Sigmoid colon (tissue), 7 donors: ENCODE measurements at regions of chr17 and their contacts with region 1.

Region 1: DNA sequence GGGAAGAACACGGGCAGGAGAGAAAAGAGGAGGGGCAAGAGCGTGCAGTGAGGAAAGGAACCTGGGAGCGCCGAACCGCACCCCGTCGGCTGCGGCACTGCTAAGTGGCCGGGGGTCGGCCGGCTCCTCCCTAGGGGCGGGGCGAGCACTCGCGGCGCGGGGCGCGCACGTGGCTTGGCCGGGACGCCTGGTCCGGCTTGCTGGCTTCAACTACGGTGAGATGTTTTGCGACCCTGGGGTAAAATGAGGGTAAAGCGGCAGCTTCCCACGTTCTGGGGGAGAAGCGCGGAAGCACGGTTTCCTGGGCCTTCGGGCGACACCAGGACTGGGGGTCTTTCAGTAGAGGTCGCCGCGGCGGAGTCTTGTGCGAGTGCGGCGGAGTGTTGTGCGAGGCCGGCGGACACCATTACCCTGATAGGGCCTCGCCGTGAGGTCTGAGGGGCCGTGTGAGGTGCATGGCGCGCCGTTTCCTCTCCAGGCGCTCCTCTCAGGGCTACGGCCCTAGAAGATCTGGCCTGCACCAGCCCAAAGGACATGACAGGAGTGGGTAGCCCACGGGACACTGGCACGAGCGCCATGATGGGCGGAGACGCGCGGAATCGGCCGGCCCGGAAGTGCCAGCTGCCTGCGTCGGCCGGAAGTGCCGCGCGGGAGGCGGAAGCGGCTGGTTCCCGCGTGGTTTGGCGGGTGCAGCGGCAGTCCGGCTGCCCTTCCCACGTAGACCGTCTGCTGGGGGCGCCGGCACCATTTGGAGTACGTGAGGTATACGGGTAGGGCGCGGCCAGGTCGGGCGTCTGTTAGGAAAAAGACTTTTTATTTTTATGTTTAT is at the starts of genes MYO19 and PIGW:
- DNase-seq: peak; percentile 93
- H3K4me3 ChIP-seq: peak within 1 kb of the TSS; percentile 67 to 76 (median 74)
- H3K27ac ChIP-seq: peak within 1 kb of the TSS; percentile 95 to 98 (median 96)
- H3K4me1 ChIP-seq: peaks cover 0 to 16% (median 5%) of the 10 kb centered on the region in 4 donors
- H3K27me3 ChIP-seq: no peaks in the 10 kb centered on the region
- CTCF ChIP-seq: no peak
- EP300 ChIP-seq: no peak
- POLR2A ChIP-seq: peak; percentile 89 to 91
- total RNA-seq, gene MYO19: 49.9 to 67.2 (median 59.5) TPM
- total RNA-seq, gene PIGW: 1.7 to 3.9 (median 3.0) TPM

Region 2: DNA sequence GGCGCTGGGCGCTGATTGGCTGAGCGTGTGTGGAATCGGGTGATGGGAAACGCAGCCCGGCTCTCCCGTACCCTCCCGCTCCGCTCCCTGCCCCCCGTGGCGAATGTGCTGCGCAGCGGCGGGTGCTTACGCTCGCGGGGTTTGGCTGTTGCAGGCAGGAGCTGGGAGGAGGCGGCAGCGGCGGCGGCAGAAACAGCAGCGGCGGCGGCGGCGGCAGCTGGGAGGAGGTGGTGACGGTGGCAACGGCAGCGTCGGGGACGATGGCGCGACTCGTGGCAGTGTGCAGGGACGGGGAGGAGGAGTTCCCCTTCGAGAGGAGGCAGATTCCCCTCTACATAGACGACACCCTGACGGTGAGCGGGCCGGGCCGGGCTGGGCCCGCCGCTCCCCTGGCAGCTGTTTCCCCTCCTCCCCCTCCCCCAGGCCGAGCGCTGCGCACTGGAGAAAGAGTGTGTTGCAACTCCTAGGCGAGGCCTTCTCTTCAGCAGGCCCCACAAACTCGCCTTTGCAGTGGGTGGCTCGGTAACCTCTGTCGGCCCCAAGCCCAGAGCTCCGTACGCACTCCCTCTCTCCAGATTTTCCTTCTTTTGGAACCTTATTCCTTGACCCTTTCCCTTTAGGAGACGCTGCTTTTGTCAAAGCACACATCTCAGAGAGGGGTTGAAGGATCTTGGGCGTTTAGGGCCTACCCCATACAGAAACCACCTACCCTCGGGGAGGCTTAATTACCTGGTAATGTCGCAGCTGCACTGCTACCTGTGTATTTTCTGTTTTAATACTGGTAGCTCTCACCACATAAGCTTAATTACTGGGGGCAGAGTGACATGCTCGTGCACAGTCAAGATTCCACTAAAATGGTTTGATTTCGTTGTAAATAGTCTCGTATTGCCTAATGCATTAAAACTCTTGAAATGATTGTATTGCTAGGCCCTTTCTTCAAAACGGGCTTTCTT is 10.7 kb after region 1 on chr17:
- intact Hi-C with region 1: loop called (anchors 1 kb)
- DNase-seq: peak; percentile 99
- H3K4me3 ChIP-seq: peak overlapping the region; percentile 68 to 96 (median 92)
- H3K27ac ChIP-seq: peak overlapping the region; percentile 95 to 100 (median 98)
- H3K4me1 ChIP-seq: peaks cover 0 to 60% (median 54%) of the 10 kb centered on the region in 4 donors
- H3K27me3 ChIP-seq: no peaks in the 10 kb centered on the region
- CTCF ChIP-seq: no peak
- EP300 ChIP-seq: no peak
- POLR2A ChIP-seq: peak; percentile 73 to 79

Region 3: GRCh38 chr17:36921095-36921851 is 386.2 kb after region 1 on chr17:
- intact Hi-C with region 1: no loop called
- DNase-seq: no peak
- H3K4me3 ChIP-seq: no peak overlapping the region
- H3K27ac ChIP-seq: no peak overlapping the region
- H3K4me1 ChIP-seq: no peaks in the 10 kb centered on the region
- H3K27me3 ChIP-seq: peaks cover 9 to 62% (median 35%) of the 10 kb centered on the region in 3 donors
- CTCF ChIP-seq: no peak
- EP300 ChIP-seq: no peak
- POLR2A ChIP-seq: no peak

Region 4: DNA sequence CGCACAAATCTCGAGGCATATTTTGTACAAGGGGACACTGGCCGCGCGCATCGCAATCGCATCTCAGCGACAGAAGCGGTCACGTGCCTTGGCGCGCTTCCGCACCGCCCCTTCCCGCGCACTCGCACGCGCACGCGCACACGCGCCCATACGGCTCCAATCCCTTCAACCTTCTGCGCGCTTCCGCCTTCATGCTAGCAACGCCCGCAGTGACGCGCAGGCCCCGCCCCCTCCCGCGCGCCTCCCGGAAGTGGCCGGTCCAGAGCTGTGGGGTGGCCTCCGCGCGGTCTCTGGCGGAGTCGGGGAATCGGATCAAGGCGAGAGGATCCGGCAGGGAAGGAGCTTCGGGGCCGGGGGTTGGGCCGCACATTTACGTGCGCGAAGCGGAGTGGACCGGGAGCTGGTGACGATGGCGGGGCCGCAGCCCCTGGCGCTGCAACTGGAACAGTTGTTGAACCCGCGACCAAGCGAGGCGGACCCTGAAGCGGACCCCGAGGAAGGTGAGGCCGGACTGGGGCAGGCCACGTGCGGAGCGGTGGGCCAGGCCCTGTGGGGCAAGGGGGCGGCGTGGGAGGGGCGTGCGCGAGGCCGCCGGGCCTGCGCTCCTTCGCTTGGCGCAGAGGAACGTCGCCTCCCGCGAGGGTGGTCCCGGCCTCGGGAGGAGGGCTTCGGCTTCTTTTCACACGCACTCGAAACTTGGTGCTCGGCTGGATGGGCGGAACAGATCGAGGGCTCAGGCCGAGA is 413.8 kb after region 1 on chr17 and contains the start of gene AATF:
- intact Hi-C with region 1: loop called (anchors 5 kb)
- DNase-seq: peak; percentile 98
- H3K4me3 ChIP-seq: peak within 1 kb of the TSS; percentile 78 to 86 (median 82)
- H3K27ac ChIP-seq: peak within 1 kb of the TSS; percentile 85 to 96 (median 91)
- H3K4me1 ChIP-seq: peaks cover 0 to 28% (median 21%) of the 10 kb centered on the region in 4 donors
- H3K27me3 ChIP-seq: peaks cover 27 to 37% (median 36%) of the 10 kb centered on the region in 3 donors
- CTCF ChIP-seq: no peak
- EP300 ChIP-seq: peak in 1 of 4 donors; percentile 43
- POLR2A ChIP-seq: peak; percentile 69 to 70
- total RNA-seq, gene AATF: 32.4 to 38.3 (median 34.6) TPM